Activated B cell treated with CpG ODN at 0.5 μM for 24 hours (primary cell): ENCODE measurements at regions of chr6 and their contacts with region 1.

Region 1: DNA sequence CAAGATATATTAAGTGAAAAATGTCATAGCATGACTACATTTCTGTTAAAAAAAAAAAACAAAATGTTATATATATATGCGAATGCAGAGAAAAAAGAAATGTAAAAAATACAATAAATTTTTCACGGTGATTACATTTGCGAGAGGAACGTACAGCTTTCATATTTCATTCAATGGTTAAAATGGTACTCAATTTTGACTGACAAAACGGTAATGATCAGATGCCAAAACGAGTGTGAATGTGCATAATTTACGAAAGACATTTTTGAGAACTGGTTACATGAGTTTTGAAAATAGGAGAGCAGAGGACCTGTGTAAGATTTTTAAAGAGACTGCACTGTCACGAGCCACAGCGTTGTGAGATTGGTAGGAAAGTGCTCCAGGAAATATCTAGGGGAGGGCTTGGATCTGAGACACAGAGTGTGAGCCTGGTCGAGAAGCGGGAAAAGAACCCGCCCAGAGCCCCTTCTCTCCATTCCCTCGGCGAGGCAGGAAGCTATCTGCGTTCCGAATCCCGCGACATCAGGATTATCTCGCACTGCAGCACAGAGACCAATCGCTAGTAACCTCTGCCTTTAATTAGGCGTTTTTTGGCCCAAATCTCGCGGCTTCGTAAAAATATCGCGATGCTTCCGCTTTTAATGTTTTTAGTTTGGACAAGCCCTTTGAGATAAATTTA is 28.5 kb downstream of the TRIM27 start:
- DNase-seq: peak; percentile 66
- ATAC-seq: peak; percentile 66
- H3K4me3 Mint-ChIP-seq: peak overlapping the region; percentile 97
- H3K27ac Mint-ChIP-seq: peak overlapping the region; percentile 99
- H3K4me1 Mint-ChIP-seq: peaks cover 23% of the 10 kb centered on the region
- H3K27me3 Mint-ChIP-seq: peaks cover 3% of the 10 kb centered on the region
- CTCF ChIP-seq: no peak

Region 2: DNA sequence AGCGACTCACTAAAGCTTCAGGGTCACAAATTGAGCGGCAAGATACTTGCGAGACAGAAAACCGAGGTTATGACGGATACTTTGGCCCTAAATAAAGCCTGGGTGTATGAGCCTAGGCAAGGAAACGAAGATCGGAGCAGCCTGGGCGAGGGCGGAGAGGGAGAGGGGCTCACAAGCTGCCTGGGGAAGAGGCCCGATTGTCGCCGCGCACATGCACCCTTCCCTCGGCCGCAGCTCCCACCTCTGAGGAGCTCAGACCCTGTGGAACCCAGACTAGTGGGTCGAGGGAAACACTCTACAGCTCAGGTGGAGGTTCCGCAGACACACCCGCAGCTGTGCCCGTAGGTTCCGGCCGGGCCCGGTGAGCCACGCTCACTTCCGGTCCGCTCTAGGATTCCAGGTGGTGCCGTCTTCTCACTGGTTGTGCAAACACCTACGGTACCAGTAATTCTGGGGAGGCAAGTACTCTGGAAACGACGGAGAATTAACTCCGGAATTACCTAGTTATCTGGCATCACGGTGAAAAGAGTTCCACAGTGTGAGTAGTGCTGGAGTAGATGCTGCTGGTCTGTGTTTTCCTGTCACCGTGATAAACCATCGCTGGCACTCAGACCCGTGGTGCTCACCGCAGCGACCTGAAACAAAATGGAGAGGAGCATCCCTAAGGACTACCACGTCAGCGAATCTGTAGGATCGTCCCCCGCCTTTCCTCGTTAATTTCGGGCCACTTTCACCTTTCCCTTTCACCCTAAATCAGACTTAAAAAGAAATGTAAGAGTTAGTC is 308.1 kb before region 1 on chr6:
- CTCF ChIA-PET with region 1: no interaction called
- POLR2A ChIA-PET with region 1: no interaction called
- intact Hi-C with region 1: no loop called
- DNase-seq: peak; percentile 36
- ATAC-seq: peak; percentile 79
- H3K4me3 Mint-ChIP-seq: peak overlapping the region; percentile 83
- H3K27ac Mint-ChIP-seq: peak overlapping the region; percentile 41
- H3K4me1 Mint-ChIP-seq: peaks cover 22% of the 10 kb centered on the region
- H3K27me3 Mint-ChIP-seq: peaks cover 79% of the 10 kb centered on the region
- CTCF ChIP-seq: no peak

Region 3: GRCh38 chr6:28863604-28864320 is 31.5 kb before region 1 on chr6:
- CTCF ChIA-PET with region 1: interaction called, 7 read pairs
- POLR2A ChIA-PET with region 1: interaction called, 33 read pairs
- intact Hi-C with region 1: loop called (anchors 1 kb)
- DNase-seq: peak; percentile 54
- ATAC-seq: peak; percentile 30
- H3K4me3 Mint-ChIP-seq: peak overlapping the region; percentile 85
- H3K27ac Mint-ChIP-seq: peak overlapping the region; percentile 90
- H3K4me1 Mint-ChIP-seq: peaks cover 27% of the 10 kb centered on the region
- H3K27me3 Mint-ChIP-seq: peaks cover 4% of the 10 kb centered on the region
- CTCF ChIP-seq: no peak

Region 4: GRCh38 chr6:28880894-28881780 is 14.1 kb before region 1 on chr6:
- CTCF ChIA-PET with region 1: no interaction called
- POLR2A ChIA-PET with region 1: interaction called, 25 read pairs
- intact Hi-C with region 1: loop called (anchors 1 kb)
- DNase-seq: peak; percentile 48
- ATAC-seq: peak; percentile 39
- H3K4me3 Mint-ChIP-seq: peak overlapping the region; percentile 75
- H3K27ac Mint-ChIP-seq: peak overlapping the region; percentile 83
- H3K4me1 Mint-ChIP-seq: peaks cover 21% of the 10 kb centered on the region
- H3K27me3 Mint-ChIP-seq: peaks cover 51% of the 10 kb centered on the region
- CTCF ChIP-seq: no peak

Region 5: GRCh38 chr6:28940858-28941680 is 45.8 kb after region 1 on chr6:
- CTCF ChIA-PET with region 1: no interaction called
- POLR2A ChIA-PET with region 1: interaction called, 15 read pairs
- intact Hi-C with region 1: loop called (anchors 1 kb)
- DNase-seq: peak; percentile 36
- ATAC-seq: peak; percentile 66
- H3K4me3 Mint-ChIP-seq: peak overlapping the region; percentile 95
- H3K27ac Mint-ChIP-seq: peak overlapping the region; percentile 88
- H3K4me1 Mint-ChIP-seq: peaks cover 47% of the 10 kb centered on the region
- H3K27me3 Mint-ChIP-seq: peaks cover 3% of the 10 kb centered on the region
- CTCF ChIP-seq: no peak

Region 6: DNA sequence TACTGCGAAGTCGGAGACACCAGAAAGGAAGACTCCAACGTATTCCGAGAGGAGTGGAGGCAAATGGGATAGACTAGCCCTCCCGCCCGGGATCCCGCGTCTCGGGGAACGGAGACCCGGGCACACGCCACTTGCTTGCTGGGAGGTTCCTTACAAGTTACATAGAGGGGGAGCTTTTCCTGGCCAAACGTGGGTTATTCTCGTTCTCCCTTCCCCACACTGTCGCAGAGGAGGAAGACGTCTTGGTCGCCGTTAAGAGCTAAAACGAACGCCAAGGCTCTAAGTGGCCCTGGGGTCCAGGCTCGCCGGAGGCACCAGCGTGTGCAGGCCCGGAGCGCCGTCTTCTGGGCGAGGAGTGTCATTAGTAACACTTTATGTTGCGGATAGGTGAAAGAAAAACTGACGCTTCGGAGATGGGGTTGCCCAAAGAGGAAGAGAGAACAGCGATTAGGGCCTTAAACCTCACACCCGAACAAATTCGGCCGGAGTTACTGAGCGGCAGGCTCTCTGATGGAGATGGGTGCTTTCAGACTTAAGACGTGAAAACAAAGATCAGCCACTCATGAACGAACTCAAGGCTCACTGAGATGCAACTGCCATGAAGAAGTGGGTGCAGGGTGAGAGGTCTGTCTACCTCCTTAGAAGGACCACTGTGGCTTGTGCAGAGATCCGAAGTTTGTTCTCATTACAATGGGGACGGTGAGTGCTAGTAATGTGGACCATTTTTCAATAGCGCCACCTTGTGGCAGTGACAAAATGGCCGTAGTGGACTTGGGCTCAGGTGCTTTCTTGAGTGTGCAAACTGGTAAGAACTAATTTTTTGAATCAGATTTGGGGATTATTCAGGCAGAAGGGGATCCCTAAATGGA is 121.5 kb after region 1 on chr6:
- CTCF ChIA-PET with region 1: interaction called, 3 read pairs
- POLR2A ChIA-PET with region 1: interaction called, 3 read pairs
- intact Hi-C with region 1: loop called (anchors 2 kb)
- DNase-seq: peak; percentile 63
- ATAC-seq: peak; percentile 85
- H3K4me3 Mint-ChIP-seq: peak overlapping the region; percentile 80
- H3K27ac Mint-ChIP-seq: peak overlapping the region; percentile 41
- H3K4me1 Mint-ChIP-seq: peaks cover 17% of the 10 kb centered on the region
- H3K27me3 Mint-ChIP-seq: peaks cover 31% of the 10 kb centered on the region
- CTCF ChIP-seq: peak; percentile 92

Region 7: GRCh38 chr6:29082457-29082856 is 187.2 kb after region 1 on chr6:
- CTCF ChIA-PET with region 1: no interaction called
- POLR2A ChIA-PET with region 1: no interaction called
- intact Hi-C with region 1: no loop called
- DNase-seq: no peak
- ATAC-seq: no peak
- H3K4me3 Mint-ChIP-seq: no peak overlapping the region
- H3K27ac Mint-ChIP-seq: no peak overlapping the region
- H3K4me1 Mint-ChIP-seq: no peaks in the 10 kb centered on the region
- H3K27me3 Mint-ChIP-seq: peaks cover 14% of the 10 kb centered on the region
- CTCF ChIP-seq: no peak

Region 8: DNA sequence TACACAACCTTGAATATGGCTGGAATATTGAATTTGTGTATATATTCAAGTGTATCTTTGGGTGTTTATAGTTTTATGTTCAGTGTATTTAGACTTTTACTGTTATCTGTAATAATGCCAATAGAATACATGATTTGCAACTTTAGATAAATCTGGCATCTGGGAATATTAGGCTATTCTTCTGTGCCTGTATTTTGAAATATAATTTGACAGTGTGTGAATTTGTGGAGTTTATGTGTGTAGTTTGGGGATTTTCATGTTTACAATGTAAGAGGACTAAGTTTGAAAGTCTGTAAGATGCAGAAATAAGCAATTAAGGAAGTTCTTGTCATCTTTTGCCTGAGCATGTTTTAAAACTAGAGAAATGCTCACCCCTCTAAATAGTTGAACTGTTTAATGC is 543.7 kb after region 1 on chr6 and contains the start of gene OR10C1:
- CTCF ChIA-PET with region 1: no interaction called
- POLR2A ChIA-PET with region 1: no interaction called
- intact Hi-C with region 1: no loop called
- DNase-seq: no peak
- ATAC-seq: no peak
- H3K4me3 Mint-ChIP-seq: no peak within 1 kb of the TSS
- H3K27ac Mint-ChIP-seq: no peak within 1 kb of the TSS
- H3K4me1 Mint-ChIP-seq: no peaks in the 10 kb centered on the region
- H3K27me3 Mint-ChIP-seq: peaks cover 17% of the 10 kb centered on the region
- CTCF ChIP-seq: no peak
- total RNA-seq, gene OR10C1: not detected in 2 replicates